OCI-LY7 (cell line): ENCODE measurements at regions of chr6 and their contacts with region 1.

Region 1: DNA sequence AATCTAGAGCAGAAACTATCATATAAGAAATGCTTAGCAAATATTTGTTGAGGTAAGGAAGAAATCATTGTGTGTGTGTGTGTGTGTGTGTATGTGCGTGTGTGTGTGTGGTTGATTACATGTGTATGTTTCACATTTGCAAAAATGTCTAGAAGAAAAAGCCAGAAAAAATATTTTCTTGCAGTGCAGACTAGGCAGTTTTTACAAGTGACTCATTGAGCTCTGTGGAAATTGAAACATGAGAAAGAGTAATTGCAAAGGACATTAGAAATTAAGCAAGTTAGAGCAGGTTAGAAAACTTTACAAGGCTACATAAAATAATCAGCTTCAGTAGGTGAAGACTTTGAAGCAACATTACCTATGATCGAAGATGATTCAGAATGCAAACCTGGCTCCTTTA is 669.0 kb upstream of the EYS start:
- DNase-seq: no peak
- H3K4me3 ChIP-seq: no peak overlapping the region
- H3K27ac ChIP-seq: no peak overlapping the region
- H3K4me1 ChIP-seq: no peaks in the 10 kb centered on the region
- CTCF ChIP-seq: no peak

Region 2: DNA sequence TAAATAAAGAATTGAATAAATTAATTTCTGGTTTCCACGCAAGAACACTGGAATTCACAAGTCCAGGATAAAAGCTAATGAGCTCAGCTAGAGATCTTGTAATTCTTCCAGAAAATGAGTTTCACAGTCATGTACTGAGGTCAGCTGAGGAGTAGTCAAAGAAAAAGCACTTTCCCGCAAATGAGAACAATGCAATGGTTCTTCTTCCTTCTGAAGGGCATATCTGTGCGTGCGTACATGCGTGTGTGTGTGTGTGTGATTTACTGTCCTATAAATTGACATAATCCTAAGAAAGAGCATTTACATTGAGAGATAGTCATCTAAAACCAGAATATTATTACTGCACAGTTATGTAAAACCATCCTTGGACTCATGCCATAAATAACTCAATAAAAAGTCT is 299.9 kb after region 1 on chr6:
- CTCF ChIA-PET with region 1: no interaction called
- POLR2A ChIA-PET with region 1: interaction called, 11 read pairs
- intact Hi-C with region 1: no loop called
- DNase-seq: no peak
- H3K4me3 ChIP-seq: no peak overlapping the region
- H3K27ac ChIP-seq: no peak overlapping the region
- H3K4me1 ChIP-seq: no peaks in the 10 kb centered on the region
- CTCF ChIP-seq: no peak